GM12878 (cell line): ENCODE measurements at regions of chr9 and their contacts with region 1.

Region 1: GRCh38 chr9:83707768-83708514 is at the start of gene UBQLN1:
- DNase-seq: peak; percentile 72
- ATAC-seq: peak; percentile 86
- H3K4me3 ChIP-seq: peak within 1 kb of the TSS; percentile 90
- H3K27ac ChIP-seq: peak within 1 kb of the TSS; percentile 96
- H3K4me1 ChIP-seq: no peaks in the 10 kb centered on the region
- H3K27me3 ChIP-seq: no peaks in the 10 kb centered on the region
- CTCF ChIP-seq: no peak
- EP300 ChIP-seq: peak; percentile 20 to 53; a peak in 1 of 4 replicates
- POLR2A ChIP-seq: peak; percentile 96
- RAD21 ChIP-seq: no peak
- polyA plus RNA-seq, gene UBQLN1: 12.4 to 15.0 TPM

Region 2: DNA sequence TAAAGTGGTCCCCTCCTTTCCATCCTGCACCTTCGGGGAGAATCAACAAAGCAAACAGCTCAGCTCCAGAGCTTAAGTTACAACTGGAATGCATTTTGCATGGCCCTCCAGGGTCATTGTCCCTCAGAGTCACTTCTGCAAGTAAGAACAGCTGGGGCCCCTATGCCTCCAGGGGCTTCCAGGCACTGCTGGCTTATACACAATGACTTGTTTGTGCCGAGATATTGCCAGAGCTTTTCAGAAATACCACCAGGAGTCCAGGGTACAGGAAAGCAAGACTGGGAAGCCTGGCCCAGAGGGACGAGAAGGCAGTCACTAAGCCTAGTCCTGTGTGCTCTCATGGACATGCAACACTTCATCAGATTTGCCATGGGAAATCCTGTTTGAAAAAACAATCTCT is 181.0 kb before region 1 on chr9:
- CTCF ChIA-PET with region 1: no interaction called
- POLR2A ChIA-PET with region 1: no interaction called
- RAD21 ChIA-PET with region 1: no interaction called
- SMC1A ChIA-PET with region 1: no interaction called
- in situ Hi-C with region 1: no loop called
- intact Hi-C with region 1: no loop called
- DNase-seq: no peak
- ATAC-seq: no peak
- H3K4me3 ChIP-seq: no peak overlapping the region
- H3K27ac ChIP-seq: no peak overlapping the region
- H3K4me1 ChIP-seq: no peaks in the 10 kb centered on the region
- H3K27me3 ChIP-seq: no peaks in the 10 kb centered on the region
- CTCF ChIP-seq: no peak
- EP300 ChIP-seq: no peak
- POLR2A ChIP-seq: no peak
- RAD21 ChIP-seq: no peak

Region 3: GRCh38 chr9:83563360-83563759 is 144.6 kb before region 1 on chr9:
- CTCF ChIA-PET with region 1: no interaction called
- POLR2A ChIA-PET with region 1: no interaction called
- RAD21 ChIA-PET with region 1: no interaction called
- SMC1A ChIA-PET with region 1: no interaction called
- in situ Hi-C with region 1: no loop called
- intact Hi-C with region 1: no loop called
- DNase-seq: no peak
- ATAC-seq: no peak
- H3K4me3 ChIP-seq: no peak overlapping the region
- H3K27ac ChIP-seq: no peak overlapping the region
- H3K4me1 ChIP-seq: no peaks in the 10 kb centered on the region
- H3K27me3 ChIP-seq: no peaks in the 10 kb centered on the region
- CTCF ChIP-seq: no peak
- EP300 ChIP-seq: no peak
- POLR2A ChIP-seq: no peak
- RAD21 ChIP-seq: no peak

Region 4: GRCh38 chr9:83688921-83689320 is 19.0 kb before region 1 on chr9:
- CTCF ChIA-PET with region 1: interaction called, 16 read pairs
- POLR2A ChIA-PET with region 1: interaction called, 7 read pairs
- RAD21 ChIA-PET with region 1: interaction called, 4 read pairs
- SMC1A ChIA-PET with region 1: interaction called, 18 read pairs
- in situ Hi-C with region 1: no loop called
- intact Hi-C with region 1: no loop called
- DNase-seq: no peak
- ATAC-seq: peak; percentile 21
- H3K4me3 ChIP-seq: no peak overlapping the region
- H3K27ac ChIP-seq: no peak overlapping the region
- H3K4me1 ChIP-seq: peaks cover 10% of the 10 kb centered on the region
- H3K27me3 ChIP-seq: no peaks in the 10 kb centered on the region
- CTCF ChIP-seq: no peak
- EP300 ChIP-seq: no peak
- POLR2A ChIP-seq: no peak
- RAD21 ChIP-seq: no peak

Region 5: GRCh38 chr9:83733739-83734138 is 25.8 kb after region 1 on chr9:
- CTCF ChIA-PET with region 1: no interaction called
- POLR2A ChIA-PET with region 1: no interaction called
- RAD21 ChIA-PET with region 1: no interaction called
- SMC1A ChIA-PET with region 1: no interaction called
- in situ Hi-C with region 1: no loop called
- intact Hi-C with region 1: no loop called
- DNase-seq: no peak
- ATAC-seq: no peak
- H3K4me3 ChIP-seq: no peak overlapping the region
- H3K27ac ChIP-seq: no peak overlapping the region
- H3K4me1 ChIP-seq: no peaks in the 10 kb centered on the region
- H3K27me3 ChIP-seq: no peaks in the 10 kb centered on the region
- CTCF ChIP-seq: no peak
- EP300 ChIP-seq: no peak
- POLR2A ChIP-seq: no peak
- RAD21 ChIP-seq: no peak

Region 6: DNA sequence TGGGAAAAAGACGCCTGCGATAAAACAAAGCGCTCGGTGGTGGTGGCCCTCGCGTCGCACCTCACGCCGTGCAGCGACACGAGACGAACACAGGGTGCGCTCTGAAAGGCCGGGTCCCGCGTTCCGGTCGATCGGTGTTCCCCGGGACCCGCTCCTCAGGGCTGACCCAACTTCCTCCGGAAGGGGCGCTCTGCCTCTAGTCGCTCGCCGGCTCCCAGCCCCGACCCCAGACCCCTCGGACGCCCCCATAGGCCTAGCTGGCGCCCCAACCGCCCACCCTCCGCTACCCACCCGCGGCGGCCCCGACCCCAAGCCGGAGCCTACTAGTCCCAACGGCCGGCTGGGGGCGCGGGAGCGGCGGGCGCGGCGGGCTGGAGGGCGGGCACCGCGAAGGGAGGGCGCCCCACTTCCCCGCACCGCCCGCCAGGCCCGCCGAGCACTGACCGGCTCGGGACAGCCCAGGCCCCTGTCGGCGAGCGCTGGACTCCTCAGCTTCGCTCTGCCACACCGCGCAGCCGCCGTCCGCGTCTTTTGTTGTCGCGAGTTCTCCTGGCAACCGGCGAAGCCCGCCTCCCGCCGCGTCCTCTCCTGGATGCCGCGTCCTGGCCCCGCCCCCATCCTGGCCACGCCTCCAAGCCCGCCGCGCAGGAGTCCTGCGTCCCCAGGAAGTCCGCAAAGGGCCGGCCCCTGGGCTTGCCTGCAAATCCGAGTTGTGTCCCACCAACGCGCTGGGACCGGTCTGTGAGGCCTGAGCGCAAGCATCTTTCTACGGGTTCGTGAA is 213.2 kb after region 1 on chr9 and contains the start of gene KIF27:
- CTCF ChIA-PET with region 1: no interaction called
- POLR2A ChIA-PET with region 1: no interaction called
- RAD21 ChIA-PET with region 1: no interaction called
- SMC1A ChIA-PET with region 1: interaction called, 3 read pairs
- in situ Hi-C with region 1: no loop called
- intact Hi-C with region 1: loop called (anchors 5 kb)
- DNase-seq: peak; percentile 80
- ATAC-seq: peak; percentile 95
- H3K4me3 ChIP-seq: peak within 1 kb of the TSS; percentile 79
- H3K27ac ChIP-seq: peak within 1 kb of the TSS; percentile 79
- H3K4me1 ChIP-seq: peaks cover 9% of the 10 kb centered on the region
- H3K27me3 ChIP-seq: no peaks in the 10 kb centered on the region
- CTCF ChIP-seq: peak in 2 of 3 experiments; percentile 11 to 19; a peak in 3 of 6 replicates
- EP300 ChIP-seq: no peak
- POLR2A ChIP-seq: peak; percentile 81
- RAD21 ChIP-seq: no peak
- polyA plus RNA-seq, gene KIF27: 0.64 to 0.92 TPM